ENCODE measurements at regions of chr17 and their contacts with region 1.

Region 1: DNA sequence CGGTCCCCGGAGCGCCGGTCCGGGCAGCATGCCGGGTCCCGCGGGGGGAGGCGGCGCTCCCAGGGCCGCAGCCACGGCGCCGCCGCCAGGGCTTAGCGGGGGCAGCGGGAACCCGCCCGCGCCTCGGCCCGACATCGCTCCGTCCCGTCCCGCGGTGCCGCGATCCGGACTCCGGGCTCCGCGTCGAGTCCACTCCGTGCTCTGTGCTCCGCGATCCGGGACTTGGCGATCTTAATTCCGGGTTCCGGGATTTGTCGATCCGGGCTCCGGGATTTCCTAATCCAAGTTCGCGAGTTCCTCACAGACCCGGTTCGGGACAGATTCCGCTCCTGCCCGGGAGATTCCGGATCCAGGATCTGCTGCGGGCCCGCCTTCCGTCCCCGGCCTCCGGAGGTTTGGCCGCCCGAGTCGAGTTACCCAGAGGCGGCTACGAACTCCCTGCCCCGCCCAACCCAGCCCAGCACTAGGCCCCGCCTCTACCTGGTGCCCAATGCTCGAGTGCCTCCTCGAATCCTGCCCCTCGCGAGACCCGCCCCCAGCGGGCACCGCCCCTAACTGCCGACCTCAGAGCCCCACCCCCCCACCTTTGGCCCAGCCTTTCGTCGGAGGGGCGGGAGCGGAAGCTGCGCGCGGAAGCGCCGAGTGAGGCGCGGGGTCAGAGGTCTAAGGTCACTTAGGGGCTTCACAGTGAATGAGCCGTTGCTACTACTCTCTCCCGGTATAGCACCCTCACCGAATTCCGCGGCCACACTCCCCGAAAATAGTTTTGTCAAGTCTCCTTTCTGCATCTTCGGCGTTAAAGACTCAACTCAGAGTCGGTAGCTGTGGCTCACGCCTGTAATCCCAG is at the start of gene SMARCD2:
- DNase-seq: peak; percentile 98 to 100 (median 99)
- ATAC-seq: peak; percentile 88
- H3K4me3 ChIP-seq: peak within 1 kb of the TSS; percentile 85
- H3K4me3 Mint-ChIP-seq: peak within 1 kb of the TSS; percentile 94
- H3K27ac ChIP-seq: peak within 1 kb of the TSS; percentile 85 to 93
- H3K27ac Mint-ChIP-seq: peak within 1 kb of the TSS; percentile 91
- H3K4me1 ChIP-seq: peaks cover 57% of the 10 kb centered on the region
- H3K4me1 Mint-ChIP-seq: peaks cover 50% of the 10 kb centered on the region
- H3K27me3 ChIP-seq: no peaks in the 10 kb centered on the region
- H3K27me3 Mint-ChIP-seq: no peaks in the 10 kb centered on the region
- CTCF ChIP-seq: no peak
- total RNA-seq, gene SMARCD2: 102 to 111 TPM

Region 2: GRCh38 chr17:63549946-63550807 is 292.6 kb before region 1 on chr17 and contains the start of gene DCAF7:
- CTCF ChIA-PET with region 1: no interaction called
- POLR2A ChIA-PET with region 1: no interaction called
- intact Hi-C with region 1: loop called in 1 of 2 experiments (anchors 5 kb)
- DNase-seq: peak; percentile 97 to 100 (median 99)
- ATAC-seq: peak; percentile 95
- H3K4me3 ChIP-seq: peak within 1 kb of the TSS; percentile 89
- H3K4me3 Mint-ChIP-seq: peak within 1 kb of the TSS; percentile 98
- H3K27ac ChIP-seq: peak within 1 kb of the TSS; percentile 90 to 91
- H3K27ac Mint-ChIP-seq: peak within 1 kb of the TSS; percentile 88
- H3K4me1 ChIP-seq: peaks cover 38% of the 10 kb centered on the region
- H3K4me1 Mint-ChIP-seq: peaks cover 52% of the 10 kb centered on the region
- H3K27me3 ChIP-seq: no peaks in the 10 kb centered on the region
- H3K27me3 Mint-ChIP-seq: no peaks in the 10 kb centered on the region
- CTCF ChIP-seq: no peak
- total RNA-seq, gene DCAF7: 11.3 to 11.9 TPM

Region 3: DNA sequence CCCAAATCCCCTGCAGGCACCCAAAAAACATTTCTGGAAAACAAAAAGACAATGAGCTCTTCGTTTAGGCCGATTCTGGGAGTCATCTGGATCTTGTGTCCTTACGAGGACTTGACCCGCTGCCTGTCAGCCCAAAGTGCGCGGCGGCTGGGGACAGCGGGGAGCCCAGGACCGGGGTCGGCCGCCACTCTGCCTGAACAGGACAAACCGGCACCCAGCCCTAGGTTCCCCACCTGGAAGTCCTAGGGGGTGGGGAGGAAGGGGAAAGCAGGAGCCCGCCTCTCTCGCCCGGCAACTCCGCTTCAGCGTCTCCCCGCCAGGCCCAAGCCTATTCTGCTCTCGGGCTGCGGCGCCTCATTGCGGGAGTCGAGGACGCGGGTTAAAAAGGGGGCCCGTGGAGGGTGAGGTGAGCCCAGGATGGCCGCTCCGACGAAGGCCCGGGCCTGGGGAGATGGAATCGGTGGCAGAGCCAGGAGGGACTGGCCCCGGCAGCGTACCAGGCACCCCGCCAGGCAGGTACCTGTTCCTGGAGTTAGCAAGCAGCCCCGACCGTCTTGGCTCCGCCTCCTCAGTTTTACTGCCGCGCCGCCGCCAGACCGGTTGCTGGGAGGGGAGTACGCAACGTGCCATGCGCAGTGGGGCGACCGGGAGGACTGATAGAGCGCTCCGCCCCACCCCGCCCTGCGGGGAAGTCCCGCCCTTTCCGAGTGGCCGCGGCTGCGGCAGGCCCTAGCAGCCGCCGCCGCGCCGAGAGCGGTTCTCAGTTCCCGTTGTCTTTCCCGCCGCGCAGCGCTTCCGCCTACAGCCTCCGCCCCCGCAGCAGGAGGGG is 101.3 kb before region 1 on chr17 and contains the start of gene STRADA:
- CTCF ChIA-PET with region 1: no interaction called
- POLR2A ChIA-PET with region 1: interaction called, 7 read pairs
- intact Hi-C with region 1: loop called in 1 of 2 experiments (anchors 5 kb)
- DNase-seq: peak; percentile 98 to 100 (median 99)
- ATAC-seq: peak; percentile 88
- H3K4me3 ChIP-seq: peak within 1 kb of the TSS; percentile 95
- H3K4me3 Mint-ChIP-seq: peak within 1 kb of the TSS; percentile 93
- H3K27ac ChIP-seq: peak within 1 kb of the TSS; percentile 94
- H3K27ac Mint-ChIP-seq: peak within 1 kb of the TSS; percentile 91
- H3K4me1 ChIP-seq: peaks cover 33% of the 10 kb centered on the region
- H3K4me1 Mint-ChIP-seq: peaks cover 24% of the 10 kb centered on the region
- H3K27me3 ChIP-seq: no peaks in the 10 kb centered on the region
- H3K27me3 Mint-ChIP-seq: no peaks in the 10 kb centered on the region
- CTCF ChIP-seq: no peak
- total RNA-seq, gene STRADA: 50.9 to 51.0 TPM

Region 4: GRCh38 chr17:63827002-63827771 is 15.6 kb before region 1 on chr17 and contains the starts of genes FTSJ3 and PSMC5:
- CTCF ChIA-PET with region 1: interaction called, 3 read pairs
- POLR2A ChIA-PET with region 1: interaction called, 86 read pairs
- intact Hi-C with region 1: loop called (anchors 1 kb)
- DNase-seq: peak; percentile 91 to 98 (median 95)
- ATAC-seq: peak; percentile 93
- H3K4me3 ChIP-seq: peak within 1 kb of the TSS; percentile 83
- H3K4me3 Mint-ChIP-seq: peak within 1 kb of the TSS; percentile 94
- H3K27ac ChIP-seq: peak within 1 kb of the TSS; percentile 77 to 96
- H3K27ac Mint-ChIP-seq: peak within 1 kb of the TSS; percentile 96
- H3K4me1 ChIP-seq: peaks cover 69% of the 10 kb centered on the region
- H3K4me1 Mint-ChIP-seq: peaks cover 75% of the 10 kb centered on the region
- H3K27me3 ChIP-seq: no peaks in the 10 kb centered on the region
- H3K27me3 Mint-ChIP-seq: no peaks in the 10 kb centered on the region
- CTCF ChIP-seq: peak; percentile 65
- total RNA-seq, gene FTSJ3: 47.6 to 51.1 TPM
- total RNA-seq, gene PSMC5: 83.1 to 84.6 TPM

Region 5: DNA sequence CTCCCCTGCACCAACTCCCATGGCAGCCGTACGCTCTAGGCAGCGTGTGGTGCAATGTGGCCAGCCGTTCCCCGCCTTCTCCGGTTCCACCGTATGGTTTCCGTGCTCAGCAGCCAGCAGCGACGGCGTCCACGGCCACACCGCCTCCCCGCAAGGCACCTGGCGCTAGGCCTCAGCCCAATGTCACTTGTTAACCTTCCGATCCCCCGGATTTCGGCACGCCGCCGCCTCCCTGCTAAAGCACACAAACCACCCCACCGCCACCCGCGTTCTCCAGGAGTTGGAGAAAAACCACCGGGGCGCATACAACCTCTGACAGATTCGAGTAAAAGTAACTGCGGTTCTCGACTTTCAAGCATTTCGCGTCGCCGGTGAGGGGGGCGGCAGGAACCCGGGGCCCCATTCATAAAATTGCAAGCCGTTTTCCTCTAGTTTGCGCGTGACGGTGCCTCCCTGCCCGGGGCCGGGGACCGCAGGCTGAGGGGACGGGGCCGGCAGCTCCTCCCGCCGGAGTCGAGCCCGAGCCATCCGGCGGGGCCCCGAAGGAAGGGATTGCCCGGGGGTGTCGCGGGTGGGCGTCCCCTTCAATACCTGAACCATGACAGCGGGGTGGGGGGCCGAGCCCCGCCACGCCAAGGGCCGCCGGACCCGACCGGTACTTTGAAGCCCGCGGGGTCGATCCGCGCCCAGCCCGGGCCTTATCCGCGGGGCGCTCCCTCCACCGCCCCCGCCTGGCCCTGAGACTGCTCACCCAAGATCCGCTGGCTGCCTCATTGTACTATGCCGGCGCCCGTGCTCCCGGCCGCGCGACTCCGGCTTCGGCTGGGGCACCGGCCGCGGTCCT is 419.9 kb after region 1 on chr17 and contains the start of gene TEX2:
- CTCF ChIA-PET with region 1: no interaction called
- POLR2A ChIA-PET with region 1: interaction called, 5 read pairs
- intact Hi-C with region 1: loop called in 1 of 2 experiments (anchors 5 kb)
- DNase-seq: peak; percentile 39 to 87 (median 60)
- ATAC-seq: peak; percentile 47
- H3K4me3 ChIP-seq: peak within 1 kb of the TSS; percentile 70
- H3K4me3 Mint-ChIP-seq: peak within 1 kb of the TSS; percentile 92
- H3K27ac ChIP-seq: peak within 1 kb of the TSS; percentile 70 to 86
- H3K27ac Mint-ChIP-seq: peak within 1 kb of the TSS; percentile 95
- H3K4me1 ChIP-seq: peaks cover 28% of the 10 kb centered on the region
- H3K4me1 Mint-ChIP-seq: peaks cover 46% of the 10 kb centered on the region
- H3K27me3 ChIP-seq: no peaks in the 10 kb centered on the region
- H3K27me3 Mint-ChIP-seq: peaks cover 6% of the 10 kb centered on the region
- CTCF ChIP-seq: no peak
- total RNA-seq, gene TEX2: 8.6 to 8.9 TPM

Measured in CD4-positive, alpha-beta T cell (primary cell).